OCI-LY7 (cell line): ENCODE measurements at regions of chr14 and their contacts with region 1.

Region 1: GRCh38 chr14:36070031-36070719 is 106.3 kb downstream of the PTCSC3 start:
- DNase-seq: peak; percentile 57
- H3K4me3 ChIP-seq: no peak overlapping the region
- H3K27ac ChIP-seq: no peak overlapping the region
- H3K4me1 ChIP-seq: peaks cover 6% of the 10 kb centered on the region
- CTCF ChIP-seq: peak; percentile 83

Region 2: GRCh38 chr14:35883677-35884293 is 186.4 kb before region 1 on chr14:
- CTCF ChIA-PET with region 1: no interaction called
- POLR2A ChIA-PET with region 1: interaction called, 3 read pairs
- intact Hi-C with region 1: loop called (anchors 10 kb)
- DNase-seq: peak; percentile 49
- H3K4me3 ChIP-seq: no peak overlapping the region
- H3K27ac ChIP-seq: no peak overlapping the region
- H3K4me1 ChIP-seq: no peaks in the 10 kb centered on the region
- CTCF ChIP-seq: peak; percentile 96

Region 3: GRCh38 chr14:35959835-35960234 is 110.3 kb before region 1 on chr14:
- CTCF ChIA-PET with region 1: no interaction called
- POLR2A ChIA-PET with region 1: no interaction called
- intact Hi-C with region 1: loop called (anchors 5 kb)
- DNase-seq: no peak
- H3K4me3 ChIP-seq: no peak overlapping the region
- H3K27ac ChIP-seq: no peak overlapping the region
- H3K4me1 ChIP-seq: no peaks in the 10 kb centered on the region
- CTCF ChIP-seq: peak; percentile 30; the same call in 1 of the 2 replicates

Region 4: DNA sequence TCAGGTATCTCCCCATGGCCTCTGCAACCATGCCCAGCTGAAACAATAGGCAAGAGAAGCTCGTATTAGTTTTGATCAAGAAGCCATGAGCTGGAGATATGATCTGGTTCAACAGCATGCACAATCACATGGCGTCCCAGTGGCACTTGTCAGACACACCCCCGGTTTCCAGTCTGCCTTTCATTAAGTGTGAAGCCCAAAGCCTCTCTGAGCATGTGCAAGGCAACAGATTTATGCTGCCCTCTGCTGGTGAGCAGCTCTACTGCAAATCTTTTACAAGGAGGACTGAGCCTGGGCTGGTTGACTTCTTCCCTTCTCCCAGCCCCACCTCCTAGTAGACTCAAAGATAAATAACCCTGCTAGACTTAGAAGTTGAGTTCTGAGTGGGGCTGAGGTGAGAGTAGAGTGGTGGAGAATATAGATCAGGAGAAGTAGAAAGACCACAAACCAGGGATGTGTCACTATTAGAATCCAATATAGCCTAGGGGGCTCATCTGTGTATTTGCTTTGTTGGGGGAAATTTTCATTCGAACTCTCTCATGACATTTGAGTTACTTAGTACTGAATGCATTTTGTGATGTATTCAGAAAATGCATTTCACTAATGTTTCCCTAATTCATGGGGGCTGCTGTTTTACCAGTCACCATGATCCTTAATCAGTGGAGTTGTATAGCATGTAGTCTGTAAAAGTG is 304.0 kb after region 1 on chr14:
- CTCF ChIA-PET with region 1: no interaction called
- POLR2A ChIA-PET with region 1: no interaction called
- intact Hi-C with region 1: loop called (anchors 1 kb)
- DNase-seq: peak; percentile 80
- H3K4me3 ChIP-seq: no peak overlapping the region
- H3K27ac ChIP-seq: no peak overlapping the region
- H3K4me1 ChIP-seq: no peaks in the 10 kb centered on the region
- CTCF ChIP-seq: peak; percentile 90